ENCODE measurements at regions of chr14 and their contacts with region 1.

Region 1: DNA sequence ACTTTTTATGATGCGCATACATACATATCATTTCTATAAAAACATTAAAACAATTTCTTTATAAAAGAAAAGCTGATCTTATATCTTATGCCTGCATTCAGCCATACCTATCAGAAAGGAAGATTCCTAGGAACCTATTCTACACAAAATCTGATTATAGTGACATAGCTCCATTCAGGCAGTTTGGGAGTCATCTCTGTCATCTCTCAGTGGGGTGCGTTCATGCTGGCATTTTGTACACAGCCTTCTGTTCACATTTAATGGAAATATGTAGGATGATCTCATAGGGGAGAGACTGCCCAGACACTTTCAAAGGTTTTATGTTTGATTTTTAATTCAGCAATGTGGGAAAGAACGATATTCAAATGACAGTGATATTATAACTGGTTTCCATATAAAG is 52.9 kb downstream of the ATL1 start:
- DNase-seq: no peak
- ATAC-seq: no peak
- H3K4me3 Mint-ChIP-seq: no peak overlapping the region
- H3K27ac Mint-ChIP-seq: no peak overlapping the region
- H3K4me1 Mint-ChIP-seq: no peaks in the 10 kb centered on the region
- H3K27me3 Mint-ChIP-seq: no peaks in the 10 kb centered on the region
- CTCF ChIP-seq: no peak

Region 2: DNA sequence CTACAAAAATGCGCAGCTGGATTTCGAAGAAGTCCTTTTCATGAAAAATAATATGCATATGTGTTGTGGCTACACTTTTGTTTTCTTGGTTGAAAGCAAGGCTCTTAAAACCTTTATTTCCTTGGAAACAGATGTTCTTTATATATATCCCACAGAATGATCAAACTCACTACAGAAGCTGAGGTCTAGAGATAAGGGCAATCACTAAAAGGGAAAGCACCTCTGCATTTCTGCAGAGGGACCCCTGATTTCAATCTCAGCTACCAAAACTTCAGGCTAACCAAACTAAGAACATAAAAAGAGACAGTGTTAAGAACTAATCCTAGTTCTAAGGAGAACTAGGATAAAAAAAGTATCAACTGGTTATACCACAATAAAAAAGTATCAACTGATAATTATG is 150.7 kb before region 1 on chr14:
- CTCF ChIA-PET with region 1: no interaction called
- POLR2A ChIA-PET with region 1: no interaction called
- intact Hi-C with region 1: no loop called
- DNase-seq: no peak
- ATAC-seq: no peak
- H3K4me3 Mint-ChIP-seq: no peak overlapping the region
- H3K27ac Mint-ChIP-seq: no peak overlapping the region
- H3K4me1 Mint-ChIP-seq: no peaks in the 10 kb centered on the region
- H3K27me3 Mint-ChIP-seq: no peaks in the 10 kb centered on the region
- CTCF ChIP-seq: no peak

Region 3: DNA sequence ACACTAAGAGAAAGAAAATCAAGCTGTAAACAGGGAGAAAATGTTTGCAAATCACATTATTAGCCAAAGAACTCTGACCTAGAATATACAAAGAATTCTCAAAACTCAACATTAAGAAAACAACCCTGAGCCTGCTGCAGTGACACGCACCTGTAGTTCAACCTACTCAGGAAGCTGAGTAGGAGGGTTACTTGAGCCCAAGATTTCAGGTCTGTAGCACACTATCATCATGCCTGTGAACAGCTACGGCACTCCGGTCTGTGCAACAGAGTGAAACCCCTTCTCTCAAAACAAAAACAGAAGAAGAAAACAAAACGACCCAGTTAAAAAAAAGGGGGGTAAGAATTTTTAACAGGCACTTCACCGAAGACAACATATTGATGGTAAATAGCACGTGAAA is 34.5 kb after region 1 on chr14:
- CTCF ChIA-PET with region 1: no interaction called
- POLR2A ChIA-PET with region 1: no interaction called
- intact Hi-C with region 1: loop called (anchors 5 kb)
- DNase-seq: no peak
- ATAC-seq: peak; percentile 96
- H3K4me3 Mint-ChIP-seq: peak overlapping the region; percentile 70
- H3K27ac Mint-ChIP-seq: peak overlapping the region; percentile 75
- H3K4me1 Mint-ChIP-seq: peaks cover 60% of the 10 kb centered on the region
- H3K27me3 Mint-ChIP-seq: no peaks in the 10 kb centered on the region
- CTCF ChIP-seq: no peak

Region 4: DNA sequence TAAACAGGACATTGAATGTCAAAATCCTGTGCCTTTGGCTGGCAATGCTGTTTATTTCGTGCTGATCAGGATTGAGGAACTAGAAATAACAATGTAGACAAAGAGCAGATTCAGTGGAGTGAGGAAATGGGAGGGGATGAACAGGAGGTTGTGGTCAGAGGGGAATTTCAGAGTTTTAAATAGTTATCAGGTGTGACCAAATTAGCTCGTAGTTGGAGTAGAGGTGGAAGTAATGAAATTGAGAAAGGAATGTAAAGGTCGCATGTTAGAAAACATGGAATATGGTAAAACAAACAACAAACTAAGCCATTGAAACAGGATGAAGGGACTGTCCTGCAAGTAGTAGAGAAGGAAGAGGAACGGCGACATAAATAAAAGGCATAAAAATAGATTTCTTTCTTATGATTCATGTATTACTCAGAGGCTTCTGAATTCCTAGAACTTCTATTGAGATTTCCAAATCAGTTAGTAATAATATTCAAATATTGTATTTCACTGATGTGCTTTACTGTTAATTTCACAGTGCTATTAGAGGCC is 64.8 kb after region 1 on chr14:
- CTCF ChIA-PET with region 1: no interaction called
- POLR2A ChIA-PET with region 1: no interaction called
- intact Hi-C with region 1: no loop called
- DNase-seq: no peak
- ATAC-seq: peak; percentile 85
- H3K4me3 Mint-ChIP-seq: peak overlapping the region; percentile 78
- H3K27ac Mint-ChIP-seq: peak overlapping the region; percentile 77
- H3K4me1 Mint-ChIP-seq: peaks cover 45% of the 10 kb centered on the region
- H3K27me3 Mint-ChIP-seq: no peaks in the 10 kb centered on the region
- CTCF ChIP-seq: no peak